ENCODE measurements at regions of chr3 and their contacts with region 1.

Region 1: GRCh38 chr3:139111392-139112229 is 66.9 kb upstream of the PRR23C start:
- DNase-seq: peak in 9 of 10 donors; percentile 43 to 80 (median 65)
- H3K4me3 ChIP-seq: peak overlapping the region in 1 of 59 donors; percentile 16
- H3K27ac ChIP-seq: peak overlapping the region in 12 of 59 donors; percentile 10 to 80 (median 68)
- H3K27me3 ChIP-seq: peaks cover 0 to 6% (median 0%) of the 10 kb centered on the region in 45 donors
- CTCF ChIP-seq: peak; percentile 48 to 93 (median 81)

Region 2: DNA sequence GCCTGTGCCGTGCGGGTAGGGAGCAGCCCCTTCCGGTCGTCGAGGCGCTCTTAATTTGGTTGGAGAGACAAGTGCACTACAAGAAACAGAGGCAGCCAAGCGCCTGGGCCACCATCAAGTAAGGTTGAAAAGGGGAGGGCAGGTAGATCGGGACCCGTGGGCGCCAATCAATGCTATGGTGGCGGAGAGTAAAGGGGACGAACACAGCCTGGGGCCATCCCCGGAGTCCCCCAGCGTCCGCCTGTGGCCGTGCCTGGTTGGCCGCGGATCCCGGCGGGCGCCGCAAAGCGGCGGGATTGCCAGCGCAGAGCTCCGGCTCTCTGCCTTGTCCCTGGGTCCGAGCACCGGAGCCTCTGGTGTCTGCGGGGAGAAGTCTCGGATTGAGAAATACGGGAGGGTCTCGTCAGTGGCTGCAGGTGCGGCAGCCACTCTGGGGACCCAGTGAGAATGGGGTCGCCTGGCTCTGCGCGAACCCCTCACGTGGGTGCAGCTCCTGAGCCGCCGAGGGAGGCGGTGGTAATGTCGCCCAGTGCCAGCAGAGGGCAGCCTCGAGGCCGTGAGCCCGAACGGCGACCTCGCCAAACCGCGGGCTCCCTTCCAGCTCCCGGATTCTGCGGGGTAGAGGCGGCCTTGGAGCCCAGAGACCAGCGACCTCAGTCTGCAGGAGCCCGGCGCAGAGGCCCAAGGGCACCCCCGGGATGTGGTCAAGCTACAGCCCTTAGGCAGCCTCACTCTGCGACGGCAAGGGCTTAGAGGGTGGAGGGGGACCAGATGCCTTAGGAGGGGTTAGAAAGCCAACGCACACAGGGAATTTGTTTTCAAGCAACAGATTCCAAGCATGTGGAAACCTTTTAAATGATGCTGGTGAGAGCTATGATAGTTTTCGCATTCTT is 175.5 kb before region 1 on chr3:
- intact Hi-C with region 1: loop called in 1 of 2 experiments (anchors 5 kb)
- DNase-seq: peak in 8 of 10 donors; percentile 39 to 77 (median 56)
- H3K4me3 ChIP-seq: peak overlapping the region in 58 of 59 donors; percentile 25 to 73 (median 51)
- H3K27ac ChIP-seq: peak overlapping the region in 1 of 59 donors; percentile 7
- H3K27me3 ChIP-seq: peaks cover 22 to 58% (median 52%) of the 10 kb centered on the region in 45 donors
- CTCF ChIP-seq: peak; percentile 65 to 96 (median 90)

Region 3: DNA sequence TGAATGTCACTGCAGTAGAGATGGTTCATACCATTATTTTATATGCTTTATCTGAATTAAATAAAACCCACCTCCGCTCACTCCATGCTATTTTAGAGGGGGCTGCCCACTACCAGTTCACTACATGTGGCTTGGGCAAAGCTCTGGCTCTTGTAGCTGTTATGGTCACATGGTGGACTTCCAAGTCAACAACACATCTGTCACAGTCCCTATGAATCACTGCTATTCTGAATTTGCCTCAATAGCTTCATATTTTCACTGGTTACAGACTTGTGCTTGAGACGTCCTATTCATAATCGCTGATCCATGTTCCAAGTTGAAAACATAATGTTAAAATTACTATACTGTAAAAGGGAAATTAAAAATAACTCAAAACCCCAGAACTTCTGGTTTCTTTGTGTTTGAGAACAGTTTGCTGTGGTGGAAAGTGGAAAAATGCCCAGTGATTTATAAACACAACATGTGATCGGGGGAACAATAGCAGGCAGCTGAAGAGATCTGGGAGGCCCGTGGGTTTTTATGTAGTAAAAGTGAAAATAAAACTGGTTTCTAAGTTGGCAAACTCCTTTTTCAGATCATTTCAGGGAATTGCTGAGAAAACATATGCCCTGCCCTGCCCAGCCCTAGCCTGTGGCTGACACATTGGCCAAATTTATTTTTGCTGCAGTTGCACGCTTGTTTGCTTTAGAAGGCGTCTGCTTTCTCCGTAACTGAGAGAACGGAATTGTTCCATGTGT is 61.9 kb after region 1 on chr3:
- intact Hi-C with region 1: loop called in 1 of 2 experiments (anchors 5 kb)
- DNase-seq: peak in 3 of 10 donors; percentile 22 to 64 (median 63)
- H3K4me3 ChIP-seq: peak overlapping the region; percentile 6 to 76 (median 53)
- H3K27ac ChIP-seq: peak overlapping the region; percentile 33 to 99 (median 93)
- H3K27me3 ChIP-seq: no peaks in the 10 kb centered on the region
- CTCF ChIP-seq: peak in 3 of 56 donors; percentile 10 to 22 (median 19)

Region 4: DNA sequence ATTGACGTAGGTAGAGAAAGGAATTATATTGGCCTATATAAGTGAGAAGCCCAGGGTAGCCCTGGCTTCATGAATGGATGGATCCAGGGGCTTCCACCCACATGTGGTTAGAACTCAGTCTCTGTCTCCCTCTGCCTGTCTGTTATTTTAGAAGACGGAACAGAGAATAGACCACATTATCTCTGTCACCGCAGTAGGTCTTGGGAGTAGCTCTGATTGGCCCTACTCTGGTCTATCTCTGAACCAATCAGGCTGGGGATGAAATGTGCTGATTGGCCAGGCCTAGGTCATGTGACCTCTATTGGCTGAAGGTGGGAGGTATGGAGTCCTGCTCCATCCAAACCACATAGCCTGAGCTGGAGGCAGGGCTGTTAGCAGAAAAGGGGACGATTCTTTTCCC is 76.0 kb after region 1 on chr3:
- intact Hi-C with region 1: loop called in 1 of 2 experiments (anchors 5 kb)
- DNase-seq: no peak
- H3K4me3 ChIP-seq: no peak overlapping the region
- H3K27ac ChIP-seq: no peak overlapping the region
- H3K27me3 ChIP-seq: no peaks in the 10 kb centered on the region
- CTCF ChIP-seq: peak in 34 of 56 donors; percentile 10 to 66 (median 38)

Region 5: DNA sequence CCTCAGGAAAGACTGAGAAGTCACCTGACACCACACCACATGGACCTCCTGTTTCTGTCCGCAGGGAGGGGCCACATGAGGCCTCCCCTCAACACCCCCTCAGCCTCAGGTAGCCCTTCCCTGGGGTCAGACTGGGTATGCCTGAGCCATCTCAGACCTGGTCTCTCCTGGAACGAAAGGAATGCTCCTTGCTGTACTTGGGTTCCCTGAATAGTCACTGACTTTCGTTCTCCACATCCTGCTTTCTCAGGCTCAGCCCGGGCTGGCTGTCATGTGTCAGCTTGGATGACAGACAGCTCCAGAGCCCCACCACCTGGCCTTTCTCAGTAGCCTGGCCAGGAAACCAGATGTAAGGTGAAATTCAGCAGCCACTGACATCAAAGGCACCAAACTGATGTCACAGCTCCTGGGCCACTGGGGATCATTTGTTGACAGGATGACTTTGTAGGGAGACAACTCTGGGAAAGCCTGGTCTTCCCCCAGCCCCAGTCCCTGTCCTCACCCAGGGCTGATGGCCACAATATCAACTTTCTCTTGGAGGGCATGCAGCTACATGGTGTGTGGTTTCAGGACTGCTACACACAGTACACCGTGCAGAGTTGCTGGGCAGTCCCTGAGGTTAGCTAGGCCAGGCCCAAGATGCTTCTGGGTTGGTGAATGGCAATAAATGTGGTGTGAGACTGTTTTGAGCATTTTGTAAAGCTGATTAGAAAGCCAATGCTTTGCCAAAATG is 90.8 kb after region 1 on chr3:
- intact Hi-C with region 1: loop called in 1 of 2 experiments (anchors 5 kb)
- DNase-seq: peak in 8 of 10 donors; percentile 5 to 68 (median 42)
- H3K4me3 ChIP-seq: peak overlapping the region in 1 of 59 donors; percentile 33
- H3K27ac ChIP-seq: no peak overlapping the region
- H3K27me3 ChIP-seq: peaks cover 0 to 5% (median 0%) of the 10 kb centered on the region in 45 donors
- CTCF ChIP-seq: peak in 49 of 56 donors; percentile 3 to 72 (median 44)

Region 6: DNA sequence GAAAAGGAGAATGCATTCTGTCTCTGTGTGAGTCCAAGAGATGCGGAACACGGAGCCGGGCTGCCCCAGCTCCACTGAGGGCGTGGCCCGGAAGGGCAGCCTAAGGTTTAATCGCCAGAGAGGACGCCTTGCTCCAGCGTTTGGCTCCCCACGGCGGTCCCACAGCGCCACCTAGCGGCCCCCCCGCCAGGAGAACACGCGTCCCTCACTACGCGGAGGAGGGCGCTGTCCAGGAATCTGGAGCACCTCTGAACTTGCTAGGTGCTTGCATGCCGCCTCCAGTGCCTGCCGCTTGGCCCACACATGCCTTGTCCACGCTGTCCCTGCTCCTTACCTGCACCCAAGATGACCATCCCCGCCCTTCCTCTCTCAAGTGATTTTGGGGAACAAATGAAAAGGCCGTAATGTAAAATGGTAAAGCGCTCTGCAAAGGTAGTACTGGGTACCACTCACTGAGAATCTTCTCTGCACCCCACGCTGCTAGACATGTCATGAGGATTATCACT is 217.8 kb after region 1 on chr3:
- intact Hi-C with region 1: loop called (anchors 2 kb)
- DNase-seq: peak; percentile 67 to 92 (median 84)
- H3K4me3 ChIP-seq: peak overlapping the region in 55 of 59 donors; percentile 5 to 61 (median 35)
- H3K27ac ChIP-seq: peak overlapping the region in 11 of 59 donors; percentile 13 to 77 (median 53)
- H3K27me3 ChIP-seq: peaks cover 0 to 7% (median 0%) of the 10 kb centered on the region in 45 donors
- CTCF ChIP-seq: peak; percentile 91 to 100 (median 100)

Measured in dorsolateral prefrontal cortex (tissue), 120 donors.